ENCODE measurements at regions of chr12 and their contacts with region 1.

Region 1: GRCh38 chr12:44812062-44812461 is 64.1 kb downstream of the NELL2 start:
- DNase-seq: peak; percentile 51 to 57 (median 56)
- H3K4me3 ChIP-seq: no peak overlapping the region
- H3K4me3 Mint-ChIP-seq: peak overlapping the region in 1 of 8 donors; percentile 18
- H3K27ac ChIP-seq: no peak overlapping the region
- H3K27ac Mint-ChIP-seq: peak overlapping the region in 2 of 7 donors; percentile 9 to 58
- H3K4me1 ChIP-seq: peaks cover 46% of the 10 kb centered on the region
- H3K4me1 Mint-ChIP-seq: peaks cover 11 to 53% (median 35%) of the 10 kb centered on the region in 4 donors
- H3K27me3 ChIP-seq: no peaks in the 10 kb centered on the region
- H3K27me3 Mint-ChIP-seq: no peaks in the 10 kb centered on the region

Region 2: GRCh38 chr12:44015335-44015941 is 796.6 kb before region 1 on chr12:
- CTCF ChIA-PET with region 1: interaction called, 4 read pairs
- POLR2A ChIA-PET with region 1: no interaction called
- intact Hi-C with region 1: loop called (anchors 1 kb)
- DNase-seq: peak in 4 of 5 donors; percentile 39 to 46 (median 41)
- H3K4me3 ChIP-seq: no peak overlapping the region
- H3K4me3 Mint-ChIP-seq: no peak overlapping the region
- H3K27ac ChIP-seq: no peak overlapping the region
- H3K27ac Mint-ChIP-seq: no peak overlapping the region
- H3K4me1 ChIP-seq: no peaks in the 10 kb centered on the region
- H3K4me1 Mint-ChIP-seq: peaks cover 0 to 2% (median under 1%) of the 10 kb centered on the region in 4 donors
- H3K27me3 ChIP-seq: no peaks in the 10 kb centered on the region
- H3K27me3 Mint-ChIP-seq: no peaks in the 10 kb centered on the region

Region 3: GRCh38 chr12:44759289-44759688 is 52.8 kb before region 1 on chr12:
- CTCF ChIA-PET with region 1: no interaction called
- POLR2A ChIA-PET with region 1: no interaction called
- intact Hi-C with region 1: no loop called
- DNase-seq: no peak
- H3K4me3 ChIP-seq: no peak overlapping the region
- H3K4me3 Mint-ChIP-seq: no peak overlapping the region
- H3K27ac ChIP-seq: no peak overlapping the region
- H3K27ac Mint-ChIP-seq: no peak overlapping the region
- H3K4me1 ChIP-seq: no peaks in the 10 kb centered on the region
- H3K4me1 Mint-ChIP-seq: no peaks in the 10 kb centered on the region
- H3K27me3 ChIP-seq: no peaks in the 10 kb centered on the region
- H3K27me3 Mint-ChIP-seq: no peaks in the 10 kb centered on the region

Region 4: DNA sequence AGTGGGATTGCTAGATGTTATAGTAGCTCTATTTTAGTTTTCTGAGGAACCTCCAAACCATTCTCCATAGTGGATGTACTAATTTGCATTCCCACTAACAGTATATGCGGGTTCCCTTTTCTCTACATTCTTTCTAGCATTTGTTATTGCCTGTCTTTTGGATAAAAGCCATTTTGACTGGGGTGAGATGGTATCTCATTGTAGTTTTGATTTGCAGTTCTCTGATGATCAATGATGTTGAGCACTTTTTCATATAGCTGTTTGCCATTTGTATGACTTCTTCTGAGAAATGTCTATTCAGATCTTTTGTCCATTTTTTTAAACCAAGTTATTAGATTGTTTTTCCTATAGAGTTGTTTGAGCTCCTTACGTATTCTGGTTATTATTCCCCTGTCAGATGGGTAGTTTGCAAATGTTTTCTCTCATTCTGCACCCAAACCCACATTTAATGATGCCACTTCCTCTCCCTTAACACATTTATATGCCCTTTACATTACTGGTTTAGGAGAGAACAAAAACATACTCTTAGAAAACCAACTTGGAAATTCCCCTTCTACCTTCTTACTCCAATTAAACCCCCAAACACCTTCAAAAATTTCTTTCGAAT is 15.9 kb after region 1 on chr12:
- CTCF ChIA-PET with region 1: interaction called, 11 read pairs
- POLR2A ChIA-PET with region 1: interaction called, 6 read pairs
- intact Hi-C with region 1: loop called (anchors 2 kb)
- DNase-seq: peak in 4 of 5 donors; percentile 65 to 80 (median 72)
- H3K4me3 ChIP-seq: peak overlapping the region; percentile 5 to 15
- H3K4me3 Mint-ChIP-seq: peak overlapping the region; percentile 64 to 85 (median 80)
- H3K27ac ChIP-seq: peak overlapping the region; percentile 44
- H3K27ac Mint-ChIP-seq: peak overlapping the region; percentile 81 to 96 (median 92)
- H3K4me1 ChIP-seq: peaks cover 55% of the 10 kb centered on the region
- H3K4me1 Mint-ChIP-seq: peaks cover 27 to 61% (median 46%) of the 10 kb centered on the region in 4 donors
- H3K27me3 ChIP-seq: no peaks in the 10 kb centered on the region
- H3K27me3 Mint-ChIP-seq: no peaks in the 10 kb centered on the region

Region 5: DNA sequence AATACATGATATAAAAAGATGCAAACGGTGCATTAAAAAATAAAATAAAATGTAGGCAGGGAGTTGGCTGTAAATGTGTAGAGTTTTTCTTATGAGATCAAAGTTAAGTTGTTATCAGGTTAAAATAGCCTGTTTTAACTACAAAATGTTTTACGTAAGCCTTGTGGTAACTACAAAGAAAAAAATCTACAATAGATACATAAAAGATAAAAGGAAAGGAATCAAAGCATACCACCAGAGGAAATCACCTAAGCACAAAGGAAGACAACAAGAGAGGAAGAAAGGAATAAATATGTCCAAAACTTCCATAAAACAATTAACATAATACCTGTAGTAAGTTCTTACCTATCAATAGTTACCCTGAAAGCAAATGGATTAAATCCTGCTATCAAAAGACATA is 51.8 kb after region 1 on chr12:
- CTCF ChIA-PET with region 1: interaction called, 14 read pairs
- POLR2A ChIA-PET with region 1: no interaction called
- intact Hi-C with region 1: no loop called
- DNase-seq: peak in 4 of 5 donors; percentile 58 to 68 (median 66)
- H3K4me3 ChIP-seq: no peak overlapping the region
- H3K4me3 Mint-ChIP-seq: peak overlapping the region in 7 of 8 donors; percentile 0 to 71 (median 52)
- H3K27ac ChIP-seq: no peak overlapping the region
- H3K27ac Mint-ChIP-seq: peak overlapping the region in 6 of 7 donors; percentile 7 to 84 (median 61)
- H3K4me1 ChIP-seq: peaks cover 40% of the 10 kb centered on the region
- H3K4me1 Mint-ChIP-seq: peaks cover 16 to 68% (median 33%) of the 10 kb centered on the region in 4 donors
- H3K27me3 ChIP-seq: no peaks in the 10 kb centered on the region
- H3K27me3 Mint-ChIP-seq: no peaks in the 10 kb centered on the region

Region 6: GRCh38 chr12:44875954-44876553 is 64.0 kb after region 1 on chr12 and contains the start of gene NELL2:
- CTCF ChIA-PET with region 1: interaction called, 228 read pairs
- POLR2A ChIA-PET with region 1: interaction called, 58 read pairs
- intact Hi-C with region 1: loop called (anchors 1 kb)
- DNase-seq: peak; percentile 46 to 77 (median 50)
- H3K4me3 ChIP-seq: peak within 1 kb of the TSS; percentile 67 to 74
- H3K4me3 Mint-ChIP-seq: peak within 1 kb of the TSS; percentile 90 to 99 (median 98)
- H3K27ac ChIP-seq: peak within 1 kb of the TSS; percentile 42
- H3K27ac Mint-ChIP-seq: peak within 1 kb of the TSS; percentile 78 to 94 (median 90)
- H3K4me1 ChIP-seq: peaks cover 35% of the 10 kb centered on the region
- H3K4me1 Mint-ChIP-seq: peaks cover 16 to 47% (median 32%) of the 10 kb centered on the region in 4 donors
- H3K27me3 ChIP-seq: peaks cover 6% of the 10 kb centered on the region
- H3K27me3 Mint-ChIP-seq: peaks cover 9 to 19% of the 10 kb centered on the region in 2 donors
- total RNA-seq, gene NELL2: 233 to 257 TPM

Measured in CD4-positive, alpha-beta memory T cell (primary cell).